CD14-positive monocyte (primary cell): ENCODE measurements at regions of chr5 and their contacts with region 1.

Region 1: GRCh38 chr5:95915999-95916686 is 45.5 kb downstream of the ELL2 start:
- DNase-seq: peak; percentile 27 to 44 (median 43)
- H3K4me3 ChIP-seq: peak overlapping the region in 1 of 3 experiments; percentile 23
- H3K4me3 Mint-ChIP-seq: peak overlapping the region in 1 of 2 donors; percentile 43
- H3K27ac ChIP-seq: peak overlapping the region in 1 of 2 donors; percentile 51
- H3K27ac Mint-ChIP-seq: peak overlapping the region; percentile 10 to 74 (median 65)
- H3K4me1 ChIP-seq: peaks cover 41 to 55% of the 10 kb centered on the region in 2 donors
- H3K4me1 Mint-ChIP-seq: peaks cover 54% of the 10 kb centered on the region
- H3K27me3 ChIP-seq: no peaks in the 10 kb centered on the region
- H3K27me3 Mint-ChIP-seq: peaks cover 0 to 1% (median 0%) of the 10 kb centered on the region in 3 donors
- CTCF ChIP-seq: no peak

Region 2: GRCh38 chr5:95878417-95879323 is 37.5 kb before region 1 on chr5:
- intact Hi-C with region 1: loop called in 1 of 2 experiments (anchors 5 kb)
- DNase-seq: no peak
- H3K4me3 ChIP-seq: no peak overlapping the region
- H3K4me3 Mint-ChIP-seq: no peak overlapping the region
- H3K27ac ChIP-seq: no peak overlapping the region
- H3K27ac Mint-ChIP-seq: peak overlapping the region in 1 of 7 donors; percentile 64
- H3K4me1 ChIP-seq: peaks cover 7 to 9% of the 10 kb centered on the region in 2 donors
- H3K4me1 Mint-ChIP-seq: peaks cover 13% of the 10 kb centered on the region
- H3K27me3 ChIP-seq: no peaks in the 10 kb centered on the region
- H3K27me3 Mint-ChIP-seq: peaks cover 0 to 2% (median 2%) of the 10 kb centered on the region in 3 donors
- CTCF ChIP-seq: no peak

Region 3: DNA sequence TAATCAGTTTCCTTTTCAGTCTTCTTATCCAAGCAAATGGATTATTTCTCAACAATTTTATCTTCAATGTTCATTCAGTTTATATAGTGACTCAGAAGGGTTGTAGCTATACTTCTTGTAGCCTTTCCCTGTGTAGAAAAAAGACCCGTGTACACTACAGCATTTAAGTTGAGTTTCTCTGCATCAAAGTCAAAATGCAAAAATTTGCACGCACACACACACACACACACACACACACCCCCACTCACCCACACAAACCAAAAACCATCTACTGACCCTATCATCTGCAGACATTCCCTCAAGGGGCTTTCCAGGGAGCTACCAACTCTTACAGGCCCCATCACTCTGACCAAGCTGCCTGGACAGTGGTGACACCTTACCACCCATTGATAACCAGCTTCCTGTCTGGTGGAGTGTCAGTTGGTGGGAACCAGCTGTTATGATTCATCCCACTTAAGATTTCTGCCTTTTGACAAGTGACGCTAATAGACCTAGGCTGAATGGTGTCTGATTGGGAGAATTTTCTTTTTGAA is 57.7 kb after region 1 on chr5:
- intact Hi-C with region 1: no loop called
- DNase-seq: peak in 2 of 3 donors; percentile 15 to 67
- H3K4me3 ChIP-seq: no peak overlapping the region
- H3K4me3 Mint-ChIP-seq: no peak overlapping the region
- H3K27ac ChIP-seq: no peak overlapping the region
- H3K27ac Mint-ChIP-seq: no peak overlapping the region
- H3K4me1 ChIP-seq: peaks cover 11% of the 10 kb centered on the region in 2 donors
- H3K4me1 Mint-ChIP-seq: no peaks in the 10 kb centered on the region
- H3K27me3 ChIP-seq: no peaks in the 10 kb centered on the region
- H3K27me3 Mint-ChIP-seq: no peaks in the 10 kb centered on the region
- CTCF ChIP-seq: no peak